Left cardiac atrium (tissue), 4 donors: ENCODE measurements at regions of chr2 and their contacts with region 1.

Region 1: DNA sequence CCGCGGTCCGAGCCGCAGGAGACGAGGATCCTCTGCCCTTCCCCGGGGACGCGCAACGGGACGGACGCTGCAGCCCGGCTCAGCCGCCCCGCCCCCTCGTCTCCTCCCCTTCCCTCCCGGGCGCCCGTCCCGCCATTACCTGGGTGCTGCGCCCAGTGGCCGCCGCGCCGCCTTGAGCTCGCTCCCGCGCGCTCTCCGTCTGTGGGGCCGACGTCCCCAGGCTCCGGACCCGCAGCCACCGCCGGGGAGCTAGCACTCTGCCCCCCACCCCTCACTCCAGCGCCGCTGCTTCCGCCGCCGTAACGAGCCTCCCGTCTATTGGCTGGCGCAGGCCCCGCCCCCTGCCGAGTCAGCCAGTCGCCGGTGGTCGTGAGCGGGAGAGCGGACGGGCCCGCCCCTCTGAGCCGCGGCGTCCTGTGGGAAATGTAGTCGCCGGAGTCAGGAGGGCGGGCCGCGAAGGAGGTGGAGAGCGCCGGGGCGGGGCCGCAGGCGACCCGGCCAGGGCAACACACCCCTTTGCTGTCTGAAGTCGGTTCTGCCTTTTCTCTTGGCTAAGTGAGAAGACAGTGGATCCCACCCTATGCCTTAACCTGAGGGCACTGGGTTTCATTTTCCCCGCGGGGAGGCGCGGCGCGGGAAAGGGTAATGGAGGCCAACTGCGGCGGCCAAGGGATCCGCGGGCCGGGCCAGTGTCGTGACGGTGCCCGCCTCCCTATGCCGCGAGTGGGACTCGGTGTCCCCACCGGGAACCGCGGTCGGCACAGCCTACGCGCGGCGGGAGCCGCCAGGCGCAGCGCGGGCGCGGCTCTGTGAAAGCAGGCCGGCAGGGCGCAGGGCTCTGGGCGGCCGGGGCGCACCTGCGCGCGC is at the start of gene SAP130:
- DNase-seq: peak; percentile 99
- ATAC-seq: peak; percentile 92 to 96
- total RNA-seq, gene SAP130: 12.0 to 13.1 TPM

Region 2: DNA sequence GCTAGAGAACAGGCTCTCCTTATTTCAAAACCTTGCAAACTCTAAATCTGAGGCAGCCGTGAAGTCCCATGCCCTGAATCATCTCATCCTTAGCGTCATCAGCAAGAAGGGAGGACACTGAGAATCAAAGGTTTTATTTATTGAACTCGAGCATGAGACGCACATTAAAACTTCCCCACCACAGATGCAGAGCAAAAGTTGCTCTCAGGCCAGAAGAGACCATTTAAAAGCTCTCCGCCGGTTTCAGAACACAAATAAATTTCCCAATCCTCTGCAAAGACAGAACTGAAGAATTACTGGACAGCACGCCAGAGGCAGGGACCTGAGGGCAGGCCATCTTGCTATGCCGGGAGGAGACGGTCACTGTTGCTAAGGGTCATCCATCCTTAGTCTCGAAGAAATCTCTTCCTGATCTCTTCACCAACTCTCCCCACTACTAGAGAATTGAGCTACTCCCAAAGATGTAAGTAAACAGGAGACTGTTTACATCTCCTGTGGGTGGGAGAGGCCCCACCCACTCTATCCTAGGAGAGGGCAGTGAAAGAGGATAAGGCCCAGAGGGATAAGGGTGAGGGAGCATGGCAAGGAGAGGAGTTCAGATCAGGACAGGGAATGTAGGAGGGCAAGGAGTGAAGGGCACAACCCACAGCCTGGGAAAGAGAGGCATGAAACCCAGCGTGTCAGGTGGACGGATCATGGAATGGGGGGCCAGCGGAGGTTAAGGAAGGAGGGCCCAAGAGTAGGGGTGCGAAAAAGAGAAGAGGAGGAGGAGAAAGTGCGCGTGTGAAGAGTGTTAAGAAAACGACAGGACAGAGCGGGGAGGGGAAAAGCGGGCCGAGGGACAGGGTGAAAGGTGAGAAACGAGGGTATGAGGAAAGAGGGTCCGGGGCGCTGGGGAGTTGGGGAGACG is 143.3 kb before region 1 on chr2:
- intact Hi-C with region 1: loop called in 1 of 2 experiments (anchors 10 kb)
- DNase-seq: no peak
- ATAC-seq: peak in 1 of 2 donors; percentile 3

Region 3: GRCh38 chr2:128090945-128091725 is 63.1 kb after region 1 on chr2 and contains the start of gene UGGT1:
- intact Hi-C with region 1: loop called in 1 of 2 experiments (anchors 2 kb)
- DNase-seq: peak; percentile 96
- ATAC-seq: peak; percentile 99 to 100
- total RNA-seq, gene UGGT1: 30.6 to 31.3 TPM